ENCODE measurements at regions of chr12 and their contacts with region 1.

Region 1: DNA sequence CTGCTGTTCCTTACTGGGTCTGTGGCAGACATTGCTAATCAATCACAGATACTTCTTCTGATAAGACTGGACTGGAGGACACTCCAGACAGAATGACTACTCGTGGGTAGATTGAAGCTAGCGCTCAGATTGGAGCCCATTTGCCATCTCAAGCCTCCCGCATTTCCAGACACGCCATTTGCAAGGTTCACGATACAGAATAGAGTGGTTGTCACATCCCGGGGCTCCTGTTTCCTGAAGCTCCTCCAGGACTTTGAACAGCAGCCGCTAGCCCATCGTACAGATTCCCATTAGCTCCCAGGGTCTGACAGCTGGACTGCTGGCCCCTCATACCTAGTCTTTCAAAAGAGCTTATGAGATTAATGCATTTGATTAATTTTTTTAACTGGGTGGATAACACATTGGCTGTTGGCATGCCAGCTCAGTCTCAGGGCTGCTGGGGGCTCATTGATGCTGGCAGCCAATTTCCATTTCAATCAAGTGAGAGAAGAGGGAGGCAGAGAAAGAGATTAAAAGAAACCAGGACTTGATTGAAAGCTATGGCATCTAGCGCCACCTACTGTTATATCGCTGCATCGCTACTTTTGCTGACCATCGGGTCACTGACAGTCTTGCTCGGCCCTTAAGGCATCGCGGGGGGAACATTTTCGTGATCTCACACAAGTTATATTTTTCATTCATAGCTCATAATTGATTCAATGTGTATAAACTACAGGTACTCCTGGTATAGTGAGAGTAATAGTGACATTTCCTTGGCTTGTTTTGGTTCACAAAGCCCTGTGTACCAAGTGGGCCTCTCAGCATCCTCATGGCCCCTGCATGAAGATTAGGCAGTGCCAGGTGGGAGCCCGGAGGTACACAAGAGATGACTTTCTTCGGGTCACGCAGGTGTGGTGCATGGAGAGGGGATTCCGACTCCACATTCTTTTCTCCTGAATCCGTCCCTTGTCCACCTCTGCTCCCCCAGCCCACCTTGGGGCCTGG is 78.6 kb downstream of the CCDC60 start:
- DNase-seq: no peak
- ATAC-seq: peak; percentile 67
- H3K4me3 ChIP-seq: no peak overlapping the region
- H3K27ac ChIP-seq: no peak overlapping the region
- H3K4me1 ChIP-seq: no peaks in the 10 kb centered on the region
- H3K27me3 ChIP-seq: no peaks in the 10 kb centered on the region
- CTCF ChIP-seq: peak; percentile 74 to 89 (median 75)
- EP300 ChIP-seq: no peak
- POLR2A ChIP-seq: no peak
- RAD21 ChIP-seq: peak; percentile 73

Region 2: DNA sequence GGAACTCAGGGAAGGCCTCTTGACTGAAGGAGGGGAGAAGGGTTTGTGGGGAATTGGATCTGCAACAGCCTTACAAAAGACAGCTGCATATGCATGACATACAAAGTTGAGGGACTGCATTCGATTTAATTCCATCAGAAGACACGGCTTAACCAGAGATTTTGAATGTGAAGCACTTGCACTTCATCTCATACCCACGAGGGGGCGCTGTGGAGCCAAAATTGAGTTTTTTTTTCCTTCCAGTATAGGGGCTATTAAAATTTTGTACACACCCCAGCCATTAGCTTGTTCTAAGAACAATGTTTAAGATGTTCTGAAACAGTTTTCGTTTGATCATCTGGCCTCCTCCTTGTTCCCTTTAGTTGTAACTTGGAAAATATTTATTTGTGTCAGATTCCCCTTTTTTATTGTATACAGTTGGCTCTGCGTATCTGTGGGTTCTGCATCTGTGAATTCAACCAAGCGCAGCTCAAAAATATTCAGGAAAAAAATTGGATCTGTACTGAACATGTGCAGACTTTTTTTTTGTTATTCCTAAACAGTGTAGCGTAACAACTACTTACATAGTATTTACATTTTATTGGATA is 1035.1 kb before region 1 on chr12:
- CTCF ChIA-PET with region 1: interaction called, 11 read pairs
- POLR2A ChIA-PET with region 1: no interaction called
- RAD21 ChIA-PET with region 1: interaction called, 5 read pairs
- SMC1A ChIA-PET with region 1: no interaction called
- in situ Hi-C with region 1: no loop called
- intact Hi-C with region 1: no loop called
- DNase-seq: no peak
- ATAC-seq: peak; percentile 39
- H3K4me3 ChIP-seq: peak overlapping the region; percentile 83
- H3K27ac ChIP-seq: peak overlapping the region; percentile 27; the same call in 1 of the 2 replicates
- H3K4me1 ChIP-seq: peaks cover 3% of the 10 kb centered on the region
- H3K27me3 ChIP-seq: no peaks in the 10 kb centered on the region
- CTCF ChIP-seq: peak; percentile 79 to 90 (median 79)
- EP300 ChIP-seq: no peak
- POLR2A ChIP-seq: no peak
- RAD21 ChIP-seq: peak; percentile 48

Region 3: GRCh38 chr12:118979763-118980406 is 433.2 kb before region 1 on chr12:
- CTCF ChIA-PET with region 1: interaction called, 8 read pairs
- POLR2A ChIA-PET with region 1: no interaction called
- RAD21 ChIA-PET with region 1: no interaction called
- SMC1A ChIA-PET with region 1: no interaction called
- in situ Hi-C with region 1: no loop called
- intact Hi-C with region 1: loop called (anchors 2 kb)
- DNase-seq: no peak
- ATAC-seq: peak; percentile 76
- H3K4me3 ChIP-seq: no peak overlapping the region
- H3K27ac ChIP-seq: no peak overlapping the region
- H3K4me1 ChIP-seq: no peaks in the 10 kb centered on the region
- H3K27me3 ChIP-seq: peaks cover 1 to 7% of the 10 kb centered on the region in 2 experiments; a peak in 1 of 4 replicates
- CTCF ChIP-seq: peak; percentile 59 to 80 (median 78)
- EP300 ChIP-seq: no peak
- POLR2A ChIP-seq: no peak
- RAD21 ChIP-seq: peak; percentile 70

Region 4: DNA sequence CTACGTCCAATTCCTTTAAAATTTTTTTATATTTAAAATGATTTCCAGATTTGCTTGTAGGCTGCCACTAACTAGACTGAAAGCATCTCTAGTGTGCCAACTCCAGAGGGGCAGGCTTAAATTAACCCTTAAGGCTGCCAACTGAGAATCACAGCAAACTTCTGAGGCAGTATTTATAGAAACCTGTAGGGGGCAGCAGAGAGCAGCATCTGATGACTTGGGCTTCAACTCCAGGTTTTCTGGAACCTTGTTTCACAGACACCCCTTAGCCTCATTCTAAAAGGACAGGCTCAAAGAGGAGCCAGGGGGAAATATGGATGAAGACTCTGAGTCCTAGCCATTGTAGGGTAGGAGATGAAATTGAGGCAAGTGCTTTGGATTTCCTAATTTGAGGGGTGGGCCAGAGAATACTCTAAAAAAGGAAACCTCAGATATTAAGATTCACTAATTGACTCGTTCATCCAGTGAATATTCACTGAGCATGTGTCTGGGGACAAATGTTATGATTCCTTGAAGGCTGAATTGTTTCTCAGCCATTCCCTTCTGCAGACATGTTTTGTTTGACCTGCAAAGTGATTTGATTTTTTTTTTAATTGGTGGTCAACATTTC is 297.7 kb before region 1 on chr12:
- CTCF ChIA-PET with region 1: interaction called, 7 read pairs
- POLR2A ChIA-PET with region 1: no interaction called
- RAD21 ChIA-PET with region 1: no interaction called
- SMC1A ChIA-PET with region 1: interaction called, 5 read pairs
- in situ Hi-C with region 1: no loop called
- intact Hi-C with region 1: loop called (anchors 1 kb)
- DNase-seq: no peak
- ATAC-seq: peak; percentile 51
- H3K4me3 ChIP-seq: no peak overlapping the region
- H3K27ac ChIP-seq: no peak overlapping the region
- H3K4me1 ChIP-seq: no peaks in the 10 kb centered on the region
- H3K27me3 ChIP-seq: no peaks in the 10 kb centered on the region; a peak in 1 of 4 replicates
- CTCF ChIP-seq: peak; percentile 66 to 81 (median 77)
- EP300 ChIP-seq: no peak
- POLR2A ChIP-seq: no peak
- RAD21 ChIP-seq: peak; percentile 53

Region 5: GRCh38 chr12:119500209-119500608 is 87.1 kb after region 1 on chr12:
- CTCF ChIA-PET with region 1: no interaction called
- POLR2A ChIA-PET with region 1: no interaction called
- RAD21 ChIA-PET with region 1: no interaction called
- SMC1A ChIA-PET with region 1: no interaction called
- in situ Hi-C with region 1: no loop called
- intact Hi-C with region 1: no loop called
- DNase-seq: no peak
- ATAC-seq: no peak
- H3K4me3 ChIP-seq: no peak overlapping the region
- H3K27ac ChIP-seq: no peak overlapping the region
- H3K4me1 ChIP-seq: no peaks in the 10 kb centered on the region
- H3K27me3 ChIP-seq: peaks cover 0 to 6% of the 10 kb centered on the region in 2 experiments; a peak in 1 of 4 replicates
- CTCF ChIP-seq: no peak; a peak in 1 of 6 replicates
- EP300 ChIP-seq: no peak
- POLR2A ChIP-seq: no peak
- RAD21 ChIP-seq: 0 out of 2 replicates have a peak, but pooled peaks have one; percentile 20

Region 6: GRCh38 chr12:119710352-119710964 is 297.4 kb after region 1 on chr12:
- CTCF ChIA-PET with region 1: no interaction called
- POLR2A ChIA-PET with region 1: no interaction called
- RAD21 ChIA-PET with region 1: no interaction called
- SMC1A ChIA-PET with region 1: no interaction called
- in situ Hi-C with region 1: no loop called
- intact Hi-C with region 1: no loop called
- DNase-seq: no peak
- ATAC-seq: no peak
- H3K4me3 ChIP-seq: no peak overlapping the region
- H3K27ac ChIP-seq: no peak overlapping the region
- H3K4me1 ChIP-seq: no peaks in the 10 kb centered on the region
- H3K27me3 ChIP-seq: no peaks in the 10 kb centered on the region
- CTCF ChIP-seq: no peak
- EP300 ChIP-seq: no peak
- POLR2A ChIP-seq: no peak
- RAD21 ChIP-seq: no peak

Measured in GM12878 (cell line).